IMR-90 (cell line): ENCODE measurements at regions of chr15 and their contacts with region 1.

Region 1: DNA sequence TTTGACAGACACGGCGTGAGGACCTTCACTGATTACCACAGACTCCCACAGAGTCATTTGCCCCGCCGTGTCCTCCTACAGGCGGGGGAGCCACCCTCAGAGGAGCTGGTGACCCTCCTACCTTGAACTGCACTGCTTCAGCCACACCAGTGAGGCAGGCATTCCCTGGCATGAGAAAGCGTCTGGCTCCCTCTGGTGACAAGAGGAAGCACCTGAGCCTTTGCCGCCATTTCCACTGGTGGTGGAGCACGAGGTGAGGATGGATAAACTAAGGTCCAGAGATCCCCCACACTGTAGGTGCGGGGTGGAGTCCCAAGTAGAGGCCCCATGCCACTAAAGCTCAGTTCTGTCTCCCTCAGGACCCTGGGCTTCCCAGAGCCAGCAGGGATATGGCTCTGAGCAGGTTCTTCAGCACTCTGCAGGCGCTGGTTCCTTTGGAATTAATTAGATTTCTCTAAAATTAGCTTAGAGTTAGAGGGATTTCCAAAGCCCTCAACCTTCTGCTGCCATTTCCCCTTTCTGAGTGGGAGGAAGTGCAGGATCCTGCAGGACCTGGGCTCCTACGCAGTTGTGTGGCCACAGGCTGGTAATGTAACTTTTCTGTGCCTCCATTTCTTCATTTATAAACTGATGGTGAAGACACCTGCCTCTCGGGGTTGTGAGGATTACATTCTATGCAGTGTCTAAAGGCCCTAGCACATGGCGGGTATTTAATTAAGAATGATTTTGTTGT is 224.0 kb downstream of the SLCO3A1 start:
- DNase-seq: peak; percentile 63
- ATAC-seq: peak; percentile 81
- H3K4me3 ChIP-seq: no peak overlapping the region
- H3K27ac ChIP-seq: no peak overlapping the region
- H3K4me1 ChIP-seq: no peaks in the 10 kb centered on the region
- H3K27me3 ChIP-seq: no peaks in the 10 kb centered on the region
- CTCF ChIP-seq: peak; percentile 83
- POLR2A ChIP-seq: no peak
- RAD21 ChIP-seq: peak; percentile 90

Region 2: GRCh38 chr15:91302588-91303439 is 774.7 kb before region 1 on chr15:
- CTCF ChIA-PET with region 1: interaction called, 3 read pairs
- POLR2A ChIA-PET with region 1: no interaction called
- dilution Hi-C with region 1: no loop called
- in situ Hi-C with region 1: loop called (anchors 5 kb)
- intact Hi-C with region 1: loop called (anchors 1 kb)
- DNase-seq: peak; percentile 63
- ATAC-seq: peak; percentile 87
- H3K4me3 ChIP-seq: no peak overlapping the region
- H3K27ac ChIP-seq: no peak overlapping the region
- H3K4me1 ChIP-seq: no peaks in the 10 kb centered on the region
- H3K27me3 ChIP-seq: peaks cover 25% of the 10 kb centered on the region
- CTCF ChIP-seq: peak; percentile 84
- POLR2A ChIP-seq: no peak
- RAD21 ChIP-seq: peak; percentile 95

Region 3: DNA sequence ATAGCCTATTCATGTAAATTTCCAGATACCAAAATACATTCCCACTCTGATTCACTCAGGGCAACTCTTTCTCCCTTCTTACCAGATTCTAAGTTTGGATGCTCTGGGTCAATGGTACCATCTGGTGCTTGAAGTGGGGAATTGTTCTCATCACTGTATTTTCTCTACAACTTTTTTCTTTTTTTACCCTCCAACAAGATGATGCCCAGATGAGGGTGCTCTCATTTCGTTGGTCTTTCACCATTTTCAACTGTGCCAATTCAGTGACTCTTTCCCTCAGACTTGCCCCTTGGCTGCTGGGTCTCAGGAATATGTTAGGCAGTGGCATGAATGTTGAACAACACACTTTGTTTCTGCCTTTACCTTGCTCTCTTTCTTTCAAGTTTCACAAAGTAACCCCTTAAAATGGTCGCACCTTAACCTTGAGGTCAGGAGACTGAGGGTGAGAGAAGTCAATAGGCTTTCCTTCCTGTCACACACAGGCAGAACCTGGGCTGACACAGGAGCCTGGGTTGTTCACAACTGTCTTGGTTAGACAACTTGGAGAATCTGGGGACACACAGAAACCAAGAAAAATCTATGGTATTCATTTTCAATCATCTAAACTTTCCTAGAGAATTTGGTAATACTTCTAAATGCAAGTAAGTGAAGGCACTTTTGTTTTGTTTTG is 554.7 kb before region 1 on chr15:
- CTCF ChIA-PET with region 1: no interaction called
- POLR2A ChIA-PET with region 1: no interaction called
- dilution Hi-C with region 1: no loop called
- in situ Hi-C with region 1: no loop called
- intact Hi-C with region 1: loop called (anchors 1 kb)
- DNase-seq: peak; percentile 80
- ATAC-seq: peak; percentile 81
- H3K4me3 ChIP-seq: no peak overlapping the region
- H3K27ac ChIP-seq: no peak overlapping the region
- H3K4me1 ChIP-seq: peaks cover 9% of the 10 kb centered on the region
- H3K27me3 ChIP-seq: no peaks in the 10 kb centered on the region
- CTCF ChIP-seq: peak; percentile 94
- POLR2A ChIP-seq: peak; percentile 62; the same call in 1 of the 2 replicates
- RAD21 ChIP-seq: peak; percentile 97

Region 4: DNA sequence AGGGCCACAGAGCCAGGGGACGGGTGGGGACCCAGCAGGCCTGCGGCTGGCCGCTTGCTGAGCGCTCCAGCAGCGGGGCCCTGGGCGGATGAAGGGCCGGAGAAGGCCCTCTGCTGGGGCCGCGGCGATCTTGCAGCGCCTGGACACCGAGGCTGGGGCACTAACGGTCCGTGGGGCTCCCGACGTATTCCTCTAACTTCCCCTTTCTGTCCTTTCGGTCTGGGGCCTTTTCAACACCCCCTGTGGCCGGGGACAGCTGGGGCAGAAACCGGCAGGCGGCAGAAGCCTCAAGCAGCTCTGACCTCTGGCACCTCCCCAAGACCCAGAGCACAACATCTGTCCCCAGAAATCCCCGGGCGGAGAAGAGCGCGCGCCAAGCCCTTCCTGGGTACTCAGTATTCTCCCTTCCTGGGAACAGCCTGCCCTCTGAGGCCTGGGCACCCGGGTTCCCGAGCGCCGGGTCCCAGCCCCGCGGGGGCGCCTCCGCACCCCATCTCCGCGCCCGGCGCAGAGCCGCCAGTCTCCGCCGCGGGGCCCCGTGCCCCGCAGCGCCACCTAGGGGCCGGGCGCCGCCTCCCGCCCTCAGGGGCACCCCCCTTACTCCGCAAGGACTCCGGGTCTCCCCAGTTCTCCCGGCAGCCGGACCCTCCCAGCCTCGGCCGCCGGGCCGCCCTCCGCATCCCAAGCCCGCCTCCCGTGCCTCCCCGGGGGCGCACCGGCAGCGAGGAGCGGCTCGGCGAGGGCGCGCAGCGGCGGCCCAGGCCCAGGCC is 224.6 kb before region 1 on chr15:
- CTCF ChIA-PET with region 1: interaction called, 5 read pairs
- POLR2A ChIA-PET with region 1: no interaction called
- dilution Hi-C with region 1: no loop called
- in situ Hi-C with region 1: loop called (anchors 5 kb)
- intact Hi-C with region 1: loop called (anchors 1 kb)
- DNase-seq: peak; percentile 56
- ATAC-seq: peak; percentile 83
- H3K4me3 ChIP-seq: peak overlapping the region; percentile 90
- H3K27ac ChIP-seq: peak overlapping the region; percentile 53
- H3K4me1 ChIP-seq: peaks cover 5% of the 10 kb centered on the region; the same call in 1 of the 2 replicates
- H3K27me3 ChIP-seq: no peaks in the 10 kb centered on the region; the same call in 1 of the 2 replicates
- CTCF ChIP-seq: peak; percentile 72
- POLR2A ChIP-seq: no peak
- RAD21 ChIP-seq: peak; percentile 52